ENCODE measurements at regions of chr6 and their contacts with region 1.

Region 1: GRCh38 chr6:79048611-79049010 is 29.4 kb downstream of the PHIP start:
- DNase-seq: peak; percentile 30
- H3K4me3 Mint-ChIP-seq: no peak overlapping the region
- H3K27ac Mint-ChIP-seq: no peak overlapping the region
- H3K4me1 Mint-ChIP-seq: peaks cover 16% of the 10 kb centered on the region
- H3K27me3 Mint-ChIP-seq: no peaks in the 10 kb centered on the region
- CTCF ChIP-seq: no peak

Region 2: GRCh38 chr6:78781001-78781400 is 267.6 kb before region 1 on chr6:
- CTCF ChIA-PET with region 1: no interaction called
- intact Hi-C with region 1: no loop called
- DNase-seq: peak; percentile 39
- H3K4me3 Mint-ChIP-seq: no peak overlapping the region
- H3K27ac Mint-ChIP-seq: no peak overlapping the region
- H3K4me1 Mint-ChIP-seq: peaks cover 16% of the 10 kb centered on the region
- H3K27me3 Mint-ChIP-seq: no peaks in the 10 kb centered on the region
- CTCF ChIP-seq: no peak

Region 3: GRCh38 chr6:79009819-79010218 is 38.8 kb before region 1 on chr6:
- CTCF ChIA-PET with region 1: no interaction called
- intact Hi-C with region 1: loop called (anchors 5 kb)
- DNase-seq: no peak
- H3K4me3 Mint-ChIP-seq: no peak overlapping the region
- H3K27ac Mint-ChIP-seq: no peak overlapping the region
- H3K4me1 Mint-ChIP-seq: no peaks in the 10 kb centered on the region
- H3K27me3 Mint-ChIP-seq: no peaks in the 10 kb centered on the region
- CTCF ChIP-seq: no peak

Region 4: GRCh38 chr6:79233611-79234149 is 185.1 kb after region 1 on chr6:
- CTCF ChIA-PET with region 1: no interaction called
- intact Hi-C with region 1: no loop called
- DNase-seq: peak; percentile 87
- H3K4me3 Mint-ChIP-seq: peak overlapping the region; percentile 89
- H3K27ac Mint-ChIP-seq: peak overlapping the region; percentile 78
- H3K4me1 Mint-ChIP-seq: peaks cover 54% of the 10 kb centered on the region
- H3K27me3 Mint-ChIP-seq: no peaks in the 10 kb centered on the region
- CTCF ChIP-seq: peak; percentile 14

Region 5: GRCh38 chr6:80060774-80061173 is 1012.2 kb after region 1 on chr6:
- CTCF ChIA-PET with region 1: no interaction called
- intact Hi-C with region 1: no loop called
- DNase-seq: no peak
- H3K4me3 Mint-ChIP-seq: no peak overlapping the region
- H3K27ac Mint-ChIP-seq: no peak overlapping the region
- H3K4me1 Mint-ChIP-seq: no peaks in the 10 kb centered on the region
- H3K27me3 Mint-ChIP-seq: no peaks in the 10 kb centered on the region
- CTCF ChIP-seq: no peak